Lower lobe of right lung (tissue), 2 donors: ENCODE measurements at regions of chr7 and their contacts with region 1.

Region 1: GRCh38 chr7:47179812-47180515 is 401.9 kb downstream of the TNS3 start:
- DNase-seq: no peak
- ATAC-seq: peak; percentile 64 to 83
- H3K4me3 ChIP-seq: no peak overlapping the region
- H3K27ac ChIP-seq: no peak overlapping the region
- H3K4me1 ChIP-seq: peaks cover 8% of the 10 kb centered on the region
- H3K27me3 ChIP-seq: no peaks in the 10 kb centered on the region
- CTCF ChIP-seq: peak; percentile 82

Region 2: GRCh38 chr7:45917658-45918057 is 1262.3 kb before region 1 on chr7:
- intact Hi-C with region 1: loop called (anchors 10 kb)
- DNase-seq: peak; percentile 79
- ATAC-seq: peak; percentile 62 to 75
- H3K4me3 ChIP-seq: peak overlapping the region; percentile 6
- H3K27ac ChIP-seq: no peak overlapping the region
- H3K4me1 ChIP-seq: peaks cover 23% of the 10 kb centered on the region
- H3K27me3 ChIP-seq: peaks cover 51% of the 10 kb centered on the region
- CTCF ChIP-seq: peak; percentile 95